Breast epithelium (tissue), 4 donors: ENCODE measurements at regions of chr11 and their contacts with region 1.

Region 1: DNA sequence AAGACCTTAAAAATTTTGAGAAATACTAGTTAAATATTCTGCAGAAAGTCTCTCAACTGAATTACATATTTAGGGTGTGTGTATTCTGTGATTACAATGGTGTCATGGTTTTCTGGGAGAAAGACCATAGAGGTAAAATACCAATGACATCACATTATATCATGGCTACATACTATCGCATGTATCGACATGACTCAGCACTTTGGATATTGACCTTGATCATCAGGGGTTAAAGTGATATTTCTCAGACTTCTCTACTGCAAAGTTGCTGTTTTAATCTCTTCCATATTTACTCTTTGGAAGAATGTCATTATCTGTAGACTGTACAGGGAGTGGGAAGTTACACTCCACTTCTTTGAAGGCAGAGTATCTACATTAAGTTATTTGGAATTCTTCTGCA is 1046.6 kb downstream of the FAM181B start:
- DNase-seq: no peak
- H3K4me3 ChIP-seq: no peak overlapping the region
- H3K27ac ChIP-seq: no peak overlapping the region
- H3K4me1 ChIP-seq: no peaks in the 10 kb centered on the region
- H3K27me3 ChIP-seq: no peaks in the 10 kb centered on the region
- CTCF ChIP-seq: no peak
- POLR2A ChIP-seq: no peak

Region 2: DNA sequence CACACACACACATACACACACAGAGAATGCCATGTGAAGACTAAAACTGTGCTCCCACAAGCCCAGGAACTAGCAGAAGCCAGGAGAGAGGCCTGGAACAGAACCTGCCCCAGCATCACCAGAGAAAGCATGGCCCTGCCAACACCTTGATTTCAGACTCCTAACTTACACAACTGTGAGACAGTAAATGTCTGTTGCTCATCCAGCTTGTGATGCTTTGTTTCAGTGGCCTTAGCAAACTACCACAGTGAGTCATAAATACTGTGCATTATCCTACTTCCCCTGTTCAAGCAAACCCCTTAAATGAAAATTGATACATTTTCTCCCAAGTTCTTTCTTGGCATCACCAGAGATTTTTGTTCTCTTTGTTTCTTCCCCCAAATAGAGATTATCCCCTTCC is 706.8 kb before region 1 on chr11:
- intact Hi-C with region 1: loop called (anchors 10 kb)
- DNase-seq: no peak
- H3K4me3 ChIP-seq: no peak overlapping the region
- H3K27ac ChIP-seq: no peak overlapping the region
- H3K4me1 ChIP-seq: no peaks in the 10 kb centered on the region
- H3K27me3 ChIP-seq: no peaks in the 10 kb centered on the region
- CTCF ChIP-seq: no peak
- POLR2A ChIP-seq: no peak

Region 3: DNA sequence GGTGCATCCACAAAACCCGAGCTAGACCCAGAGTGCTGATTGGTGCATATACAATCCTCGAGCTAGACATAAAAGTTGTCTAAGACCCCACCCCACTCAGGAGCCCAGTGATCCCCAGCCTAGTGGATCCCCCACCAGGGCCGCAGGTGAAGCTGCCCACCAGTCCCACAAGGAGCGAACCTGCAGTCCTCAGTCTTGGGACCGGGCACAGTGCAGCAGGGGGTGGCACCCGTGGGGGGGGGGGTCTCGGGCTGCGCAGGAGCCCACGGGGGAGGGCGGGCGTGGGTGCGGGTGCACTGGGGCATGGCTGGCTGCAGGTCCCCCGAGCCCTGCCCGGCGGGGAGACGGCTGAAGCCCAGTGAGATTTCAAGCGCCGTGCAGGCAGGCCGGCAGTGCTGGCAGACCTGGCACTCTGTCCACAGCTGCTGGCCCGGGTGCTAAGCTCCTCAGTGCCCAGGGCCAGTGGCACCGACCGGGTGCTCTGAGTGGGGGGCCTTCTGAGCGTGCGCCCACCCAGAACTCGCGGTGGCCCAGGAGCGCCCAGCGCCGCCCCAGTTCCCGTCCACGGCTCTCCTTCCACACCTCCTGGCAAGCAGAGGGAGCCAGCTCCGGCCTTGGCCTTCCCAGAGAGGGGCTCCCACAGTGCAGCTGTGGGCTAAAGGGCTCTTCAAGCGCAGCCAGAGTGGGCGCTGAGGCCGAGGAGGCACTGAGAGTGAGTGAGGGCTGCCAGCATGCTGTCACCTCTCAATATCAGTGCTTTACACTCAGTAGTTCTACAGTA is 57.5 kb after region 1 on chr11:
- intact Hi-C with region 1: no loop called
- DNase-seq: no peak
- H3K4me3 ChIP-seq: no peak overlapping the region
- H3K27ac ChIP-seq: no peak overlapping the region
- H3K4me1 ChIP-seq: no peaks in the 10 kb centered on the region
- H3K27me3 ChIP-seq: no peaks in the 10 kb centered on the region
- CTCF ChIP-seq: no peak
- POLR2A ChIP-seq: no peak